Activated T-helper 1 cell treated with anti-CD3 and anti-CD28 coated beads, Interleukin-12 subunit alpha, Interleukin-12 subunit beta, Interleukin-2, Interleukin-4 antibody, amounts not matched to agents 30 ng/mL and 10 ng/mL and 1 ng/mL, durations not matched to agents 14 hours and 24 hours and 36 hours (primary cell): ENCODE measurements at regions of chr16 and their contacts with region 1.

Region 1: DNA sequence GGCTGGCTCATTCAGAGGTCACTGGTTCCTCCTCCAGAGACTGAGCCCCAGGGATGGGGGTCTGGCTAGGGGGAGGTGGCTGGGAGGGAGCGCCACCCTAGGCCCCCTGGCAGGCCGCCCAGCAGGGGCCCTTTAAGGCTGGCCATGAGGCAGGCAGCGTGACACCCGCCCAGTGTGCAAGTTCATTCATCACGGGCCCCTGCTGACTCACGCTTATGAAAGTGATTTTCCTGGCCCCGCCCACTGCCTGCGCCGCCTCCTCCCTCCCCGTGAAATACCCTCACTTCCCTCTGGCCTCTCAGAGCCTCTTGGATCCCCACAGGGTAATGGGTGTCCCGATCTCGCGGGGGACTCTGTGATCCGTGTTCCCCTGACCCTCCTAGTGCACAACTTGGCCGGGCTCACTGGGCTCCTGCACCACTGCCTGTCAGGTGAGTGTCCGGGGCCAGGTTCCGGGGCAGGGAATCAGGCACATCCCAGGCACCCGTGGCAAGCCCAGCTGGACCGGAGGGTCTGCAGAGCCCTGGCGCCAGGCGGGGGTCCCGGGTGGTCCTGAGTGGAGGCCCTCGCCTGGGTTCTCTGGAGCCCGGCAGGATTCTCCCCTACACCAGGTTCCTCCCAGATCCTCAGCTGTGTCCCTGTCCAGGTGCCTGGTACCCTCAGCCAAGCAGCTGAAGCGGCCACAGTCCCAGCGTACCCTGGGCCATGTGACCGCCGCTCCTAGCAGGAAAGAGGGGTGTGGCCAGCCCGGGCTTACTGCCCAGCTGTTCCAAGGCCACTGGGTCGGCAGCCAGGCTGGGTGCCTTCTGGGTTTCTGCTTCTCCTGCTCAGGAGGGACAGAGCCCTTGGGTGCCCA is at the start of gene OSGIN1:
- DNase-seq: peak; percentile 66
- H3K4me3 Mint-ChIP-seq: peak within 1 kb of the TSS; percentile 80
- H3K27ac Mint-ChIP-seq: peak within 1 kb of the TSS; percentile 48
- H3K4me1 Mint-ChIP-seq: peaks cover 18% of the 10 kb centered on the region
- H3K27me3 Mint-ChIP-seq: peaks cover 11% of the 10 kb centered on the region
- total RNA-seq, gene OSGIN1: 1.2 and 2.2 TPM in 2 replicates

Region 2: GRCh38 chr16:83807710-83808572 is 145.2 kb before region 1 on chr16 and contains the start of gene HSBP1:
- intact Hi-C with region 1: loop called (anchors 1 kb)
- DNase-seq: peak; percentile 91
- H3K4me3 Mint-ChIP-seq: peak within 1 kb of the TSS; percentile 98
- H3K27ac Mint-ChIP-seq: peak within 1 kb of the TSS; percentile 95
- H3K4me1 Mint-ChIP-seq: peaks cover 30% of the 10 kb centered on the region
- H3K27me3 Mint-ChIP-seq: peaks cover 2% of the 10 kb centered on the region
- total RNA-seq, gene HSBP1: 112 and 115 TPM in 2 replicates

Region 3: DNA sequence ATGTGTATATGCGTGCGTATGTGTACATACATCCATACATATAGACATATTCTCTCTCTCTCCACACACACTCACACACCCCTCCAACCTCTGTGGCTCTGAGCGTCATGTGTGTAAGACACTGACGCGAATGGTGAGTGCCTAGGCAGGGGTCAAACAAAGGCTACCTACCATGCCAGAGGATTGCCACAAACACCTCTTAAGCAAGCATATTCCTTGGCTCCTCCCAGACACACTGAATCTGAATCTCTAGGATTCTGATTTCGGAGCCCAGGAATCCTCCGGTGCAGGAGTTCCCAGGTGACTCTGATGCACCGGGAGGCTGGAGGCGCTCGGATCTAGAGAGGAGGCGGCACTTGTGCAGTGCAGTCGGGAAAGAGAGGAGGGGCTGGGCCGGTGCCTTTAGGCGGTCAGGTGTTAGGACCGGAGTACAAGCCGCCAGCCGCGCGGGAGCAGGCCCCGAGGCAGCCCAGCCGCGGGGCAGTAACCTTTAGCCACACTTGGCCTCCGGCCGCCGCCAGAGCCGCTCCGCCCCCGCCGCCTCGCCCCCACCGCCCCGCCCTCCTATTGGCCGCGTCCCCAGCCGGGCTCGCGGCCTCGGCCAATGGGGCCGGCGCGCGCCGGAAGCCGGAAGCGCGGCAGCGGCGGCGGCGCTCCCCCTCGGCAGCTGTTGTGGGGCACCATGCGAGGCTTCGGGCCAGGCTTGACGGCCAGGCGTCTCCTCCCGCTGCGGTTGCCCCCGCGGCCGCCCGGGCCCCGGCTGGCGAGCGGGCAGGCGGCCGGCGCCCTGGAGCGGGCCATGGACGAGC is 54.5 kb before region 1 on chr16 and contains the start of gene MLYCD:
- intact Hi-C with region 1: loop called (anchors 1 kb)
- DNase-seq: peak; percentile 73
- H3K4me3 Mint-ChIP-seq: peak within 1 kb of the TSS; percentile 94
- H3K27ac Mint-ChIP-seq: peak within 1 kb of the TSS; percentile 77
- H3K4me1 Mint-ChIP-seq: peaks cover 27% of the 10 kb centered on the region
- H3K27me3 Mint-ChIP-seq: peaks cover 10% of the 10 kb centered on the region
- total RNA-seq, gene MLYCD: 5.0 and 6.1 TPM in 2 replicates

Region 4: GRCh38 chr16:84065536-84066132 is 112.5 kb after region 1 on chr16:
- intact Hi-C with region 1: loop called (anchors 1 kb)
- DNase-seq: peak; percentile 21
- H3K4me3 Mint-ChIP-seq: no peak overlapping the region
- H3K27ac Mint-ChIP-seq: no peak overlapping the region
- H3K4me1 Mint-ChIP-seq: no peaks in the 10 kb centered on the region
- H3K27me3 Mint-ChIP-seq: no peaks in the 10 kb centered on the region

Region 5: GRCh38 chr16:84175350-84176081 is 222.3 kb after region 1 on chr16:
- intact Hi-C with region 1: loop called (anchors 1 kb)
- DNase-seq: peak; percentile 32
- H3K4me3 Mint-ChIP-seq: no peak overlapping the region
- H3K27ac Mint-ChIP-seq: no peak overlapping the region
- H3K4me1 Mint-ChIP-seq: peaks cover 6% of the 10 kb centered on the region
- H3K27me3 Mint-ChIP-seq: no peaks in the 10 kb centered on the region

Region 6: DNA sequence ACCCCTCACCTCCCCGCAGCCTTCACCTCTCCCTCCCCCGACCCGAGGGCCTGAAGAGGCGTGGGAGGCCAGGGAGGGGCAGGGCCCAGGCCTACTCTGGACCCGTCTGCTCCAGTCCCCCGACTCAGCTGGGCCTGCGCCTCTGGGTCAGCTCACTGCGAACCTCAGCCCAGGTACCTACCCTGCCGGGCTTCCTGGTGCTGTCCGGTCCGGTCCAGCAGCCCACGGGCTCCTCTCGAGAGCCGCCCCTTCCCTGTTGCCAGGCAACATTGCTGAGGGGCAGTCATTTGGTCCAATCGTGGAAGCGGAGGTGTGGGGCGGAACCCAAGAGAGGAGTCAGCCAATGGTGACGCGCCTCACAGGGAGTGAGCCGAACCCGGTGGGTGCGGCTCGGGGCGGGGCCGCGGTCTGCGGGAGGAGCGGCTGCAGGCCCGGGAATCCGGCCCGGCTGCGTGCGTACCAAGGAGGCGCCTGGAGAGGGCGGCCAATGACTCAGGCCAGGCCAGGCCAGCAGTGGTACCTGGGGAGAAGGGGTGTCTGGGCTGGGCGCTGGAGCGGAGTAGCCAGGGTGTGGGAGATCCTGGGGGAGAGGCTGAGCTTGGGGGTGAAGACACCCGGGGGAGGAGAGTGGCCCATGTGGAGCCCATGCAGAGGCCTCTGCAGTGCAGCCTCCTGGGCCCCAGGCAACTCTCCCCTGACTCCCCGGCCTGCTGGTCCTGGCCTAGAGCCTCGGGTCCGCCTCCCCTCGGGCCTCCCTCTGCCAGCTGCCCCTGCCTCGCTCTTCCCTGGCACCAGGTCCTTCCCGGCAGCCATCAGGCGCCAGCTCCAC is 551.5 kb after region 1 on chr16 and contains the start of gene MEAK7:
- intact Hi-C with region 1: loop called (anchors 2 kb)
- DNase-seq: peak; percentile 97
- H3K4me3 Mint-ChIP-seq: peak within 1 kb of the TSS; percentile 85
- H3K27ac Mint-ChIP-seq: peak within 1 kb of the TSS; percentile 81
- H3K4me1 Mint-ChIP-seq: peaks cover 46% of the 10 kb centered on the region
- H3K27me3 Mint-ChIP-seq: no peaks in the 10 kb centered on the region
- total RNA-seq, gene MEAK7: 10.6 and 10.9 TPM in 2 replicates